ENCODE measurements at regions of chr17 and their contacts with region 1.

Region 1: GRCh38 chr17:1390433-1391367 is 9.3 kb downstream of the YWHAE start:
- DNase-seq: no peak
- ATAC-seq: peak; percentile 48
- H3K4me3 ChIP-seq: no peak overlapping the region
- H3K4me3 Mint-ChIP-seq: peak overlapping the region; percentile 1 to 73 (median 28)
- H3K27ac ChIP-seq: peak overlapping the region; percentile 6
- H3K27ac Mint-ChIP-seq: peak overlapping the region; percentile 32 to 69 (median 50)
- H3K4me1 ChIP-seq: peaks cover 56 to 78% of the 10 kb centered on the region in 2 donors
- H3K4me1 Mint-ChIP-seq: peaks cover 48 to 95% (median 68%) of the 10 kb centered on the region in 7 donors
- H3K27me3 ChIP-seq: no peaks in the 10 kb centered on the region
- H3K27me3 Mint-ChIP-seq: no peaks in the 10 kb centered on the region

Region 2: DNA sequence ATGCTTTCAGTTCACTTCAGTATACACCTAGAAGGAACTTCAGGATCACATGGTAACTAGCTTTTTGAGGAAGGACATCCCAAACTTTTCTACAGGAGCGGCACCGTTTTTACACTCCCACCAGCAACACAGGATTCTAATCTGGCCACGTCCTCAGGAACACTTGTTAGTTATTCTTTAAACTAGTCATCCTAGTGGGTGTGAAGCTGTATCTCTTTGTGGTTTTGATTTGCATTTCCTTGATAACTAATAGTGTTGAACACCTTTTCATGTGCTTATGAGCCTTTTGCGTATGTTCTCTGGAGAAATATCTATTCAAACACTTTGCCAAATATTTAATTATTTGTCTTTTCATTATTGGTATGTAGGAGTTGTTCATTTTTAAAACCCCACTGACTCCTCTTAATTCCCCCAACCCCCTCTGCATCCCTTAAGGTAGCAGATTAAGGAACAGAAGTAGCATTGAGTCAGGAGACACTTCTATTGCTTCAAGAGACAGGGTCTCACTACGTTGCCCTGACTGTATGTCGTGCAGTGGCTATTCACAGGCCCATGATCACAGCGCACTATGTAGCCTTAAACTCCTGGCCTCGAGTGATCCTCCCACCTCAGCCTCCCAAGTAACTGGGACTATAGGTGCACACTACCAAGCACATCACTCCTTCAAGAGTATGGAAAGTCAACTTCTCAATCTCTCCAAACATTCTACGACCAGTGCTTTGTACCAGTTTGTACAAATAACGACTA is 16.1 kb before region 1 on chr17:
- CTCF ChIA-PET with region 1: interaction called, 4 read pairs
- POLR2A ChIA-PET with region 1: interaction called, 3 read pairs
- intact Hi-C with region 1: loop called in 1 of 2 experiments (anchors 2 kb)
- DNase-seq: no peak
- ATAC-seq: peak; percentile 66
- H3K4me3 ChIP-seq: peak overlapping the region; percentile 5
- H3K4me3 Mint-ChIP-seq: peak overlapping the region; percentile 1 to 81 (median 58)
- H3K27ac ChIP-seq: peak overlapping the region; percentile 44
- H3K27ac Mint-ChIP-seq: peak overlapping the region; percentile 46 to 88 (median 86)
- H3K4me1 ChIP-seq: peaks cover 55 to 62% of the 10 kb centered on the region in 2 donors
- H3K4me1 Mint-ChIP-seq: peaks cover 52 to 96% (median 75%) of the 10 kb centered on the region in 7 donors
- H3K27me3 ChIP-seq: no peaks in the 10 kb centered on the region
- H3K27me3 Mint-ChIP-seq: no peaks in the 10 kb centered on the region

Region 3: DNA sequence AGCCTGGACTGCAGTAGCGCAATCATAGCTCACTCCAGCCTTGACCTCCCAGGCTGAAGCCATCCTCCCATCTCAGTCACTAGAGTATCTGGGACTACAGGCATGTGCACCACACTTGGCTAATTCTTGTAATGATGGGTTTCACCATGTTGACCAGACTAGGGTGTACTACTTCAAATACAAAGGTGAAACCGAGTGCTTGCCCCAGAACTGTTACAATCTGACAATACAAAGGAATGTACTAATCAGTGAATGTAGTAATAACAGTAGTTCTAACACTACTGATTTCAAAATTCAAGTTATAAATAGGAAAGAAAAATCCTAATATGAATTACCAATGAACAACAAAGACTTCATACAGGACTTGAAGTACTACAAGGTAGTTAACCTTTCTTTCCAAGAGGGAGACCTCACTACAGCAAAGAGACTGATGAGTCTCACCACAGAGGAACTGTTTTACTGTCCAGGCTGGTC is 41.0 kb after region 1 on chr17:
- CTCF ChIA-PET with region 1: no interaction called
- POLR2A ChIA-PET with region 1: no interaction called
- intact Hi-C with region 1: no loop called
- DNase-seq: no peak
- ATAC-seq: no peak
- H3K4me3 ChIP-seq: no peak overlapping the region
- H3K4me3 Mint-ChIP-seq: peak overlapping the region in 1 of 10 donors; percentile 30
- H3K27ac ChIP-seq: no peak overlapping the region
- H3K27ac Mint-ChIP-seq: peak overlapping the region in 2 of 9 donors; percentile 32 to 49
- H3K4me1 ChIP-seq: no peaks in the 10 kb centered on the region
- H3K4me1 Mint-ChIP-seq: peaks cover 9 to 40% (median 24%) of the 10 kb centered on the region in 7 donors
- H3K27me3 ChIP-seq: no peaks in the 10 kb centered on the region
- H3K27me3 Mint-ChIP-seq: no peaks in the 10 kb centered on the region

Measured in naive thymus-derived CD4-positive, alpha-beta T cell (primary cell).